ENCODE measurements at regions of chr17 and their contacts with region 1.

Region 1: DNA sequence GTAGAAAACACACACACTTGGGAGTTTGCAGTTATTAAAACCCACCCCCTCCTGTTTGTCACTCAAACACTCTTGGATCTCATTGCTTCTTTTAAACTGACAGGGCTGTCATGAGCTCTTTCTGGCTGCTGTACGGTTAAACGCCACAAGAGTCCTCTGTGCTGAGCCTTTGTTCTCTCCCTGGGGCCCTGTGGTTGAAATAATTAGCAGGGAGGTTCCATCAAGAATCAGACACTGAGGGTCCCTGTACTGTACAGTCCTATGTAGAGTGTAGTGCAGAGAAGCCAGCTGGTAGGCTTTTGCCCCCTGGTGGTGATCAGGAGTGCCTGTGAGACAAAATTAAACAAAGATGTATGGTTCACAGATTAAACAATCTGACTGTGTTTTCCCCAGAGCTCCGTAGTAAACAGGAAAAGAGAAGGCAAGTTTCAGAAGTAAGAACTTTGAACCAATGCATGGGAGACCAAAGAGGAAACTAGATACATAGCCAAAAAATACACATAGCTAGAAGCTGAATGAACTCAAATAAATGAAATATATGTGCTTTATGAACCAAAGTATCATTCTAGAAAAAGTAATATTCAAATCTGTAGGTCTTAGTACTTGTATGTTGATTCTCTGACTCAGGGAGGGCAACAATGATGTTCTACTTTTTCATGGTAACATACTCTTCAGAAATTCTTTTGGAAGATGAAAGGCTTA is 1.4 kb upstream of the SSH2 start:
- DNase-seq: peak in 1 of 2 donors; percentile 74
- H3K4me3 ChIP-seq: peak overlapping the region; percentile 87 to 99
- H3K27ac ChIP-seq: no peak overlapping the region
- H3K4me1 ChIP-seq: peaks cover 0 to 7% of the 10 kb centered on the region in 2 donors
- H3K27me3 ChIP-seq: no peaks in the 10 kb centered on the region
- CTCF ChIP-seq: peak; percentile 74 to 87 (median 81)

Region 2: GRCh38 chr17:29589524-29590410 is 341.6 kb before region 1 on chr17 and contains the start of gene GIT1:
- intact Hi-C with region 1: loop called (anchors 2 kb)
- DNase-seq: peak in 1 of 2 donors; percentile 92
- H3K4me3 ChIP-seq: peak within 1 kb of the TSS; percentile 84 to 97
- H3K27ac ChIP-seq: peak within 1 kb of the TSS; percentile 87 to 95
- H3K4me1 ChIP-seq: peaks cover 36 to 57% of the 10 kb centered on the region in 2 donors
- H3K27me3 ChIP-seq: no peaks in the 10 kb centered on the region
- CTCF ChIP-seq: peak in 1 of 3 experiments; percentile 7
- total RNA-seq, gene GIT1: 142 TPM

Region 3: GRCh38 chr17:29645515-29646051 is 285.8 kb before region 1 on chr17:
- intact Hi-C with region 1: loop called (anchors 10 kb)
- DNase-seq: peak; percentile 54 to 89
- H3K4me3 ChIP-seq: no peak overlapping the region
- H3K27ac ChIP-seq: peak overlapping the region; percentile 69 to 84
- H3K4me1 ChIP-seq: peaks cover 12 to 32% of the 10 kb centered on the region in 2 donors
- H3K27me3 ChIP-seq: no peaks in the 10 kb centered on the region
- CTCF ChIP-seq: no peak

Region 4: GRCh38 chr17:29807520-29808351 is 123.6 kb before region 1 on chr17:
- intact Hi-C with region 1: loop called (anchors 1 kb)
- DNase-seq: peak in 1 of 2 donors; percentile 69
- H3K4me3 ChIP-seq: no peak overlapping the region
- H3K27ac ChIP-seq: no peak overlapping the region
- H3K4me1 ChIP-seq: no peaks in the 10 kb centered on the region
- H3K27me3 ChIP-seq: no peaks in the 10 kb centered on the region
- CTCF ChIP-seq: peak; percentile 50 to 73 (median 62)

Region 5: GRCh38 chr17:29867643-29868181 is 63.7 kb before region 1 on chr17:
- intact Hi-C with region 1: loop called (anchors 2 kb)
- DNase-seq: no peak
- H3K4me3 ChIP-seq: no peak overlapping the region
- H3K27ac ChIP-seq: no peak overlapping the region
- H3K4me1 ChIP-seq: peaks cover 0 to 2% of the 10 kb centered on the region in 2 donors
- H3K27me3 ChIP-seq: no peaks in the 10 kb centered on the region
- CTCF ChIP-seq: peak in 1 of 3 experiments; percentile 26

Region 6: DNA sequence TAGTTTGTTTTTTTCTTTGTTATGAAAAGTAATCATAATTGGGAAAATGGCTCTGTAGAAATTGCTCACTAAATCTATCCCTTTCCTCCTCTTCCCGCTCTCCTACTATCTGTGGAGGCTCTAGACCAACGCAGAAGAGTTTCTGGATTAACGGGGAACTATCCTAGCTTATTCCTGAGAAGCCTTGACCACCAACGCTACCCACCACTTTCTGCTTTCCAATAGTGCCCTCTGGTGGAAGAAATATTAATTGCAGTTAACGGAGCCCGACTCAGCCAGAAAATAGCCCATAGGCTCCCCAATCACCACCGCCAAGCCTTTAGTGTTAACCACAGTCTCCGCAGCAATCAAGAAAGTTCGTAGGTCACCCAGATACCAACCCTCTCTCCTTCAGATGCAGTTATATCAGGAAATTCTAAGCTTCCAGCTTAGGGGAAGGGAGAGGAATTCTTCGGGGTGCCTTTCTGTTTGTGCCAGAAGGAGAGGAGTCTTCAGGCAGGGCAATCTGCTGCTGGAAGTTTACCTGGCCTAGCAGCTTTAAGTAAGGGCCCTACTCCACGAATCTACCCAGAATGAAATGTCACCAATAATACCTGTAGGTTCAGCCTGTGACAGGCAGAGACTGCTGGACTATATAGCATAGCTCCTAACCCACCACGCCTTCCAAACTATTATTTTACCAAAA is 162.2 kb after region 1 on chr17:
- intact Hi-C with region 1: loop called (anchors 5 kb)
- DNase-seq: peak in 1 of 2 donors; percentile 71
- H3K4me3 ChIP-seq: no peak overlapping the region
- H3K27ac ChIP-seq: no peak overlapping the region
- H3K4me1 ChIP-seq: no peaks in the 10 kb centered on the region
- H3K27me3 ChIP-seq: no peaks in the 10 kb centered on the region
- CTCF ChIP-seq: peak; percentile 59 to 84 (median 73)

Measured in ascending aorta (tissue), 2 donors.